Calu3 (cell line): ENCODE measurements at regions of chr3 and their contacts with region 1.

Region 1: GRCh38 chr3:27712136-27713077 is 9.7 kb downstream of the EOMES start:
- DNase-seq: peak; percentile 75
- H3K4me3 Mint-ChIP-seq: peak overlapping the region; percentile 68
- H3K27ac Mint-ChIP-seq: no peak overlapping the region
- H3K4me1 Mint-ChIP-seq: peaks cover 25% of the 10 kb centered on the region
- H3K27me3 Mint-ChIP-seq: peaks cover 49% of the 10 kb centered on the region
- CTCF ChIP-seq: peak; percentile 45

Region 2: DNA sequence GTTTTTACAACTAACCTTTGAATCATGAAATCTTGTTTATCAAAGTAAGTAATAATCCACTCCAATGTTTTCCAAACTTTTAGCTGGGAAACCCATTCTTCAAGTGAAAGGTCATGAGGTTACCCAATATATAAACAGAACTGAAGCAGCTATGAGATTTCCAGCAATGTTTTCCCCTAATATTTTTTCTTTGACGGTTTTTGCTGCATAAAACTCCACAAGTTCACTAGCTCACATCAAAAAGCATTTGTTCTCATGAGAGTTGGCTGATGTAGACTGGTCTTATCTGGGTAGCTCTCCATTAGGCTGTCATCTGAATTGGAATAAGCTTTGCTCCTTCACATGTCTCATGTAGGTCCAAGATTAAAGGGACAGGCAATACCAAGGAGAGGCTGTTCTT is 1331.0 kb before region 1 on chr3:
- CTCF ChIA-PET with region 1: no interaction called
- intact Hi-C with region 1: no loop called
- DNase-seq: no peak
- H3K4me3 Mint-ChIP-seq: no peak overlapping the region
- H3K27ac Mint-ChIP-seq: no peak overlapping the region
- H3K4me1 Mint-ChIP-seq: no peaks in the 10 kb centered on the region
- H3K27me3 Mint-ChIP-seq: no peaks in the 10 kb centered on the region
- CTCF ChIP-seq: no peak

Region 3: DNA sequence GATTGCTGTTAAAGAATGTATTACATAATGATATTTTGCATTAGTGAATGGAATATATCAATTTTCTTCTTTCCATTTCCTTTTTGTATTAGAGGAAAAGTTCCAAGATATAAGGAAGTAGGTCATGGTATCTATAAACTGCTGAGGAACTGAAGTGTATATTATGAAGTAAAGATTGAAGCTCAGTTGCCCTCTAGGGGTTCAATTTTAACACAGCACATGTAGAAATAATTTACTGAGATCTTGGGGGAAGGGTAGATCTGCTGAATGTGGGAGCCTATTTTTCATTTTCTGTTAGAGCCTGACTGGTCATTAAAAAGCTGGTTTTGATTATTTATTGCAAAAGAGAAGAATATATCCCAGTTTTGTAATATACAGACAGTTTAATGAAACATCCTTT is 574.2 kb after region 1 on chr3:
- CTCF ChIA-PET with region 1: no interaction called
- intact Hi-C with region 1: loop called (anchors 5 kb)
- DNase-seq: no peak
- H3K4me3 Mint-ChIP-seq: no peak overlapping the region
- H3K27ac Mint-ChIP-seq: no peak overlapping the region
- H3K4me1 Mint-ChIP-seq: no peaks in the 10 kb centered on the region
- H3K27me3 Mint-ChIP-seq: no peaks in the 10 kb centered on the region
- CTCF ChIP-seq: no peak

Region 4: GRCh38 chr3:28328188-28329151 is 616.1 kb after region 1 on chr3:
- CTCF ChIA-PET with region 1: interaction called, 8 read pairs
- intact Hi-C with region 1: loop called (anchors 1 kb)
- DNase-seq: no peak
- H3K4me3 Mint-ChIP-seq: no peak overlapping the region
- H3K27ac Mint-ChIP-seq: no peak overlapping the region
- H3K4me1 Mint-ChIP-seq: no peaks in the 10 kb centered on the region
- H3K27me3 Mint-ChIP-seq: no peaks in the 10 kb centered on the region
- CTCF ChIP-seq: peak; percentile 13